Activated naive CD4-positive, alpha-beta T cell treated with anti-CD3 and anti-CD28 coated beads for 36 hours (primary cell): ENCODE measurements at regions of chr11 and their contacts with region 1.

Region 1: DNA sequence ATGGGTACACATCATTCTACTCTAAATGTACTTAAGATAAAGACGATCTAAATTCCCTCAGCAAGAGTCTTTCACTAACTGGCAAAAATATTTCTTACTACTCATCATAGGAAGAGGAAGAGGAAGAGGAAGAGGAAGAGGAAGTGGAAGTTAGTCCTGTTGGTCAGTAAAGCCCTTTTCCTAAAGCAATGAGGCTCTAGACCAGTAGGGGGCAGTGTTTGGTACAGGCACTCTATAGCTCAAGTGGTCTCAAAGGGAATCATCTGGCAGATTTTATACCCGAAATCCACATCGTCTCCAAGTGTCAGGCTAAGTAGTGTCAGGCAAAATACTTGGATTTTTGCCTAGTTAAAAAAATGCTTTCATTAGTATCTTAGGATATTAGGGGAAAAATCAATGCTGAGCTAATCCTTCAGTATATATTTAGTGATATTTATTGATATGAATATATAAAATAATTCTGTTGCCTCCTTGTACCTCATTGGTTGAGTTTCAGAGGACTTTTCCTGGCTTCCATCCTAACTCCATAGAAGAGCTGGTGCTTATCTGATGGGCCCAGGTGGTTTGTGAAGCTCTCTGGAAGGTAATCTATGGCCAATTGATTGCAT is 7.7 kb downstream of the BLID start:
- DNase-seq: peak; percentile 39
- H3K4me3 Mint-ChIP-seq: no peak overlapping the region
- H3K27ac Mint-ChIP-seq: no peak overlapping the region
- H3K4me1 Mint-ChIP-seq: no peaks in the 10 kb centered on the region
- H3K27me3 Mint-ChIP-seq: peaks cover 18% of the 10 kb centered on the region

Region 2: GRCh38 chr11:122202951-122203456 is 94.7 kb after region 1 on chr11:
- CTCF ChIA-PET with region 1: interaction called, 3 read pairs
- intact Hi-C with region 1: loop called (anchors 2 kb)
- DNase-seq: peak; percentile 60
- H3K4me3 Mint-ChIP-seq: no peak overlapping the region
- H3K27ac Mint-ChIP-seq: no peak overlapping the region
- H3K4me1 Mint-ChIP-seq: no peaks in the 10 kb centered on the region
- H3K27me3 Mint-ChIP-seq: peaks cover 24% of the 10 kb centered on the region

Region 3: GRCh38 chr11:122505304-122506006 is 397.2 kb after region 1 on chr11:
- CTCF ChIA-PET with region 1: no interaction called
- intact Hi-C with region 1: loop called (anchors 5 kb)
- DNase-seq: peak; percentile 75
- H3K4me3 Mint-ChIP-seq: no peak overlapping the region
- H3K27ac Mint-ChIP-seq: no peak overlapping the region
- H3K4me1 Mint-ChIP-seq: no peaks in the 10 kb centered on the region
- H3K27me3 Mint-ChIP-seq: peaks cover 30% of the 10 kb centered on the region